Natural killer cell (primary cell): ENCODE measurements at regions of chr3 and their contacts with region 1.

Region 1: GRCh38 chr3:16849229-16849628 is 35.5 kb upstream of the PLCL2 start:
- DNase-seq: peak; percentile 60 to 85
- ATAC-seq: peak; percentile 78 to 97 (median 96)
- H3K4me3 ChIP-seq: peak overlapping the region; percentile 1
- H3K4me3 Mint-ChIP-seq: peak overlapping the region; percentile 62
- H3K27ac ChIP-seq: peak overlapping the region; percentile 40
- H3K27ac Mint-ChIP-seq: peak overlapping the region; percentile 3 to 79
- H3K4me1 ChIP-seq: peaks cover 23% of the 10 kb centered on the region
- H3K4me1 Mint-ChIP-seq: peaks cover 37 to 38% of the 10 kb centered on the region in 2 donors
- H3K27me3 ChIP-seq: no peaks in the 10 kb centered on the region
- H3K27me3 Mint-ChIP-seq: peaks cover 0 to 6% of the 10 kb centered on the region in 2 donors
- CTCF ChIP-seq: no peak

Region 2: DNA sequence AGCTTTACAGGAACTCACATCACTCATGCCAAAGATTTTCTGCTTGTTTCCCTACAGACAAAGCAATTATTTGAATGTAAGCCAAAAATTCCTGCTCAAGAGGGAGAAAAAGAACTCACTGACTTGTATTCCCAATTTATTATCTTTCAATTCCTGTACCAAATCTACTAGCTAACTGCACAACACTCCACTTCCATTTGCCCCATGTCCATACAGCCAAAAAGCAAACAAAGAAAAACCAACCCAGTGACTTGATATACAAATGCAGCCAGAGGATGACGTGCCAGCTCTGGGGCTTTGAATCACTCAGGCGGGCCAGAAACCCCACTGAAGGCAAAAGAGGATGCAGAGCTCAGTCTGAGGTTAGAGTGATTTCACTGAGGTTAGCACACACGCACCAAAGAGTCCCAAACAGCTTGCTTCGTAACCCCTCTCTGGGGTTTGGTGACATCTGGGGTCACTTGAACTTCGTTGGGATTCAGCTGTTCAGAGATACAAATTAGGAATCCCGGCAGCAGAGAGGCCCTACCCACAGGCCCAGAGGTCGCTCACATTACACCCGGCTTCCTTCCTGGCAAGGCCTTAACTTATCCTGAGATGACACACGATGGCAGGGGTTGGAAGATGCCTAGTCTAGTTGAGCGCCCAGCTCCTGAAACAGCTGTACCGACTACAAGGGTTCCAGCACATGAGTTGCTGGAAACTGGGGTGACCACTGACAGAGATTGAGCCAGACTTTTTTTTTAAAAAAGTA is 337.4 kb before region 1 on chr3:
- intact Hi-C with region 1: loop called (anchors 10 kb)
- DNase-seq: peak; percentile 66 to 94
- ATAC-seq: peak; percentile 50 to 76 (median 74)
- H3K4me3 ChIP-seq: peak overlapping the region; percentile 70
- H3K4me3 Mint-ChIP-seq: peak overlapping the region; percentile 97
- H3K27ac ChIP-seq: peak overlapping the region; percentile 92
- H3K27ac Mint-ChIP-seq: peak overlapping the region; percentile 91 to 97
- H3K4me1 ChIP-seq: peaks cover 74% of the 10 kb centered on the region
- H3K4me1 Mint-ChIP-seq: peaks cover 80 to 88% of the 10 kb centered on the region in 2 donors
- H3K27me3 ChIP-seq: no peaks in the 10 kb centered on the region
- H3K27me3 Mint-ChIP-seq: no peaks in the 10 kb centered on the region
- CTCF ChIP-seq: no peak